CD4-positive, alpha-beta T cell (primary cell): ENCODE measurements at regions of chr2 and their contacts with region 1.

Region 1: DNA sequence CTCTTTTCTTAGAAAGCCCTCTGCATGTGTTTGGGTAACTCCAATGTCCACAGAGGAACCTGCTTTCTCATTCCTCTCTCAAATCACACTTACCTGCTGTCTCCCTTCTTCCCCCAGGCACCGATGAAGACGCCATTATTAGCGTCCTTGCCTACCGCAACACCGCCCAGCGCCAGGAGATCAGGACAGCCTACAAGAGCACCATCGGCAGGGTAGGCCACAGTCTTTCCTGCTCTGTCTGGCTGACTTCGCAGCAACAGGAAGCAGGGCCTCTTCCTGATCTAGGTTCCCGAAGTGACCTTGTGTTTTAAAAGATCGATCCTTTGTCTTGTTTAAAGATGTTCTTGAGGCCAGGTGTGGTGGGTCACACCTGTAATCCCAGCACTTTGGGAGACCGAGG is 25.0 kb upstream of the GMCL1 start:
- DNase-seq: peak in 2 of 14 experiments; percentile 15 to 32
- ATAC-seq: no peak
- H3K4me3 ChIP-seq: no peak overlapping the region
- H3K4me3 Mint-ChIP-seq: no peak overlapping the region
- H3K27ac ChIP-seq: no peak overlapping the region
- H3K27ac Mint-ChIP-seq: no peak overlapping the region
- H3K4me1 ChIP-seq: peaks cover 5% of the 10 kb centered on the region
- H3K4me1 Mint-ChIP-seq: peaks cover 17% of the 10 kb centered on the region
- H3K27me3 ChIP-seq: no peaks in the 10 kb centered on the region
- H3K27me3 Mint-ChIP-seq: no peaks in the 10 kb centered on the region
- CTCF ChIP-seq: no peak

Region 2: GRCh38 chr2:69353360-69353759 is 451.1 kb before region 1 on chr2:
- CTCF ChIA-PET with region 1: no interaction called
- POLR2A ChIA-PET with region 1: no interaction called
- intact Hi-C with region 1: no loop called
- DNase-seq: no peak
- ATAC-seq: no peak
- H3K4me3 ChIP-seq: no peak overlapping the region
- H3K4me3 Mint-ChIP-seq: no peak overlapping the region
- H3K27ac ChIP-seq: no peak overlapping the region
- H3K27ac Mint-ChIP-seq: no peak overlapping the region
- H3K4me1 ChIP-seq: no peaks in the 10 kb centered on the region
- H3K4me1 Mint-ChIP-seq: no peaks in the 10 kb centered on the region
- H3K27me3 ChIP-seq: no peaks in the 10 kb centered on the region
- H3K27me3 Mint-ChIP-seq: no peaks in the 10 kb centered on the region
- CTCF ChIP-seq: no peak

Region 3: DNA sequence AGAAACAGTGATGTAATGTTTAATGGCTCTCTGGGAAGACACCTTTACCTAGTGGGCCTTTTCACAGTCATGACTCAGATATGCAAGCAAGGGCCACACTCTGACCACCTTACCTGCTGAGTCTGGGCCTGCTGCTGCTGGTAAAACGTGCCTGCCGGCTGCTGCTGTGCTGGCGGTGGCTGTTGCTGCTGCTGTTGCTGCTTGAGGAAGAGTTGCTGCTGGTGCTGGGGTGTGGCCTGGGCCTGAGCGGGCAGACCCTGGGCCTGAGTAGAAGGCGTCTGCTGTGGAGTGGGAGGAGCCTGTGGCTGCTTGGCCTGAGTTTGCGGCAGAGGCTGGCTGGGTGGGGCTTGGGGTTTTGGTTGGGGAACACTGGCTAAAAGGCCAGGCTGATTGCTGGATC is 285.6 kb before region 1 on chr2:
- CTCF ChIA-PET with region 1: no interaction called
- POLR2A ChIA-PET with region 1: no interaction called
- intact Hi-C with region 1: no loop called
- DNase-seq: no peak
- ATAC-seq: no peak
- H3K4me3 ChIP-seq: no peak overlapping the region
- H3K4me3 Mint-ChIP-seq: no peak overlapping the region
- H3K27ac ChIP-seq: no peak overlapping the region
- H3K27ac Mint-ChIP-seq: peak overlapping the region; percentile 58
- H3K4me1 ChIP-seq: no peaks in the 10 kb centered on the region
- H3K4me1 Mint-ChIP-seq: no peaks in the 10 kb centered on the region
- H3K27me3 ChIP-seq: no peaks in the 10 kb centered on the region
- H3K27me3 Mint-ChIP-seq: no peaks in the 10 kb centered on the region
- CTCF ChIP-seq: no peak

Region 4: DNA sequence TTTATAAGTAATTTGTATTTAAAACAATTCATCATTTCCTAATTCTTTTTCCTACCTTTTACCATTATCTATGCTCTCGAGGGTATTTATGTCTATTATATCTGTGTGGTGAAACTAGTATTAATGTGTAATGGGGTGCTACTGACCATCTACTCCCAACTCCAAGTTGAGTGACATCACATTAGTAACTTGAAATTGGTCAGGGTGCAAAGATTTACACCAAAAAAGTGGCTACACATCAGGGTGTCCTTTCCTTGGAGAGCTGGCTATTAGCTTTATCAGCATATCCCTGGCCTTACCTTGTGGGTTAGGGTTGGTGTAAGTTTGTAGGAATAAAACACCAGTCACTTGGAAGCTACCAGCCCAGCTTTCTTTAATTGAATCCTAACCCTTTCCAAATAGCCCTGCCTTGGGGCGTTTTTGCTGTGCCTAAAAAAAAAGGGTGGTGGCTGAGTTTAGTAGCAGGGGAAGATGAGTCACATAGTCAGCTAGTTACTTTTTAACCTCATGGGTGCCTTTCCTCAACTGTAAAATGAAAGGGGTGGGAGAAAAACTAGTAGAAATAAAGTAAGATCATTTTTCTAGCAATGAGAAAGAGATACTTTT is 48.5 kb before region 1 on chr2:
- CTCF ChIA-PET with region 1: no interaction called
- POLR2A ChIA-PET with region 1: no interaction called
- intact Hi-C with region 1: no loop called
- DNase-seq: no peak
- ATAC-seq: no peak
- H3K4me3 ChIP-seq: no peak overlapping the region
- H3K4me3 Mint-ChIP-seq: no peak overlapping the region
- H3K27ac ChIP-seq: no peak overlapping the region
- H3K27ac Mint-ChIP-seq: no peak overlapping the region
- H3K4me1 ChIP-seq: peaks cover 3% of the 10 kb centered on the region
- H3K4me1 Mint-ChIP-seq: peaks cover 5% of the 10 kb centered on the region
- H3K27me3 ChIP-seq: no peaks in the 10 kb centered on the region
- H3K27me3 Mint-ChIP-seq: no peaks in the 10 kb centered on the region
- CTCF ChIP-seq: no peak

Region 5: DNA sequence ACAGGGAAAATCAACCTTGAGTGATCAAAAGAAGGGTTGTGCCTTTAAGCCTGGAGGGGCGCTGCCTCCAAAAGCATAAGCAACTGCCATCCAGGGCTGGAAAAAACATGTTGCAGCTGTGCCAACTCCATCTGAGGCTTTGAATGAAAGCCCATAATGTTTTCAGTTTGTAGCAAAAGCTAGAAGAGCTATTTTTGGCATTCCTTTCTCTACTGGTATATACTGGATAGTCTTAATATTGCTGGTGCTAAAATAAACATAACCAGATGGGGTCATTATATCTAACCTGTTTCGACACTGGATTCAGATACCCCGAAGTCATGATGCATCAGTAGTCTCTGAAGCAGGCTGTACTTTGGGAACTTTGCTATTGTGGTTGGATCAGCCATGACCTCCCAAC is 37.4 kb before region 1 on chr2:
- CTCF ChIA-PET with region 1: no interaction called
- POLR2A ChIA-PET with region 1: no interaction called
- intact Hi-C with region 1: loop called in 1 of 2 experiments (anchors 5 kb)
- DNase-seq: no peak
- ATAC-seq: no peak
- H3K4me3 ChIP-seq: no peak overlapping the region
- H3K4me3 Mint-ChIP-seq: no peak overlapping the region
- H3K27ac ChIP-seq: no peak overlapping the region
- H3K27ac Mint-ChIP-seq: no peak overlapping the region
- H3K4me1 ChIP-seq: peaks cover 11% of the 10 kb centered on the region
- H3K4me1 Mint-ChIP-seq: peaks cover 28% of the 10 kb centered on the region
- H3K27me3 ChIP-seq: no peaks in the 10 kb centered on the region
- H3K27me3 Mint-ChIP-seq: no peaks in the 10 kb centered on the region
- CTCF ChIP-seq: no peak

Region 6: DNA sequence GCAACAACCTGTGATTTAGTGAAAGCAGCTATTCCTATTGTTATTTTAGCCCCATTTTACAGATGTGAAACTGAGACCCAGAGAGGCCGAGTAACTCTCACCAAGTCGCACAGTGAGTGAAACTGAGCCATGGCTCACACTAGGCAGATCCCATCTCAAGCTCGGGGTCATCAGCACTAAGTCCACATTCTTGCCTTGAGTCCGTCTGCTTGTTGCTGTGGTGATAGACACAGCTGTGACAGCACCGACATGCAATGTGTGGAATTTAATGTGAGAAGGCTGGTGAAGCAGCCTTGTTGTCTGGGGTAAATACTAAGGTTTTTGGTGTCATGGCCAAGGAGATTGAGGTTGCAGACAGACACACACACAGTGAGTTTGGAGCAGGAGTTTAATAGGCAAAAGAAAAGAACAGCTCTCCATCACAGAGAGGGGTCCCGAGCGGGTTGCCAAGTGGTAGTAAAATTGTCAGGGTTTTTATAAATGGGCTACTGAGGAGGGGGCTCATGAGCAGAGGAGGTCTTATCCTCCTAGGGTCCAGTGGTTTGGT is 15.2 kb before region 1 on chr2:
- CTCF ChIA-PET with region 1: no interaction called
- POLR2A ChIA-PET with region 1: no interaction called
- intact Hi-C with region 1: no loop called
- DNase-seq: no peak
- ATAC-seq: no peak
- H3K4me3 ChIP-seq: no peak overlapping the region
- H3K4me3 Mint-ChIP-seq: no peak overlapping the region
- H3K27ac ChIP-seq: no peak overlapping the region
- H3K27ac Mint-ChIP-seq: no peak overlapping the region
- H3K4me1 ChIP-seq: no peaks in the 10 kb centered on the region
- H3K4me1 Mint-ChIP-seq: peaks cover 9% of the 10 kb centered on the region
- H3K27me3 ChIP-seq: no peaks in the 10 kb centered on the region
- H3K27me3 Mint-ChIP-seq: no peaks in the 10 kb centered on the region
- CTCF ChIP-seq: no peak